WTC11 (cell line): ENCODE measurements at regions of chr12 and their contacts with region 1.

Region 1: DNA sequence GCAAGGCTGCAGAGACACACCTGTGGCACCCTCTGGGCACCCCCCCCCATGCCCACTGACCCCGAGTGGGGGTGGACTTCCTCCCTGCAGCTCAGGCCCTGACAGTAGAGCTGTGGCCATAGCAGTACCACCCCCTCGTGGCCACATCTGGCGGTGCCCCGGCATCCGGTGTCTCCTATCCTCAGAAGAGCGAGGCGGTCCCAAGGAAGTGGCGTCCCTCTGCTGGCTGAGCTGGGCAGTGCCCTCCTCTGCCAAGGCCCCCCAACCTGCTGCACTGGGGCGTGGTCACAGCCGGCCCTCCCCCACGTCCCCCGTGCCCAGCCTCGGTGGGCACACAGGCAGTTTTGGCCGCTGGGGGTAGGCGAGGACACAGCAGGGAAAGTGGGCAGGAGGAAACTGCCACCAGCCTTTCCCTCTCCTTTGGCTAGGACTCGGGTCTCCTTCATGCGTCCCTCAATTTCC is 6.0 kb upstream of the SLC6A12 start:
- DNase-seq: peak; percentile 97
- ATAC-seq: peak; percentile 99
- H3K4me3 Mint-ChIP-seq: peak overlapping the region; percentile 25; the same call in 1 of the 2 replicates
- H3K27ac Mint-ChIP-seq: no peak overlapping the region
- H3K4me1 Mint-ChIP-seq: peaks cover 9% of the 10 kb centered on the region
- H3K27me3 Mint-ChIP-seq: peaks cover 5% of the 10 kb centered on the region; the same call in 1 of the 2 replicates
- CTCF ChIP-seq: peak; percentile 86

Region 2: GRCh38 chr12:138898-139534 is 80.9 kb before region 1 on chr12:
- CTCF ChIA-PET with region 1: interaction called, 10 read pairs
- POLR2A ChIA-PET with region 1: no interaction called
- DNase-seq: peak; percentile 49
- ATAC-seq: peak; percentile 46
- H3K4me3 Mint-ChIP-seq: peak overlapping the region; percentile 50
- H3K27ac Mint-ChIP-seq: no peak overlapping the region
- H3K4me1 Mint-ChIP-seq: peaks cover 45% of the 10 kb centered on the region
- H3K27me3 Mint-ChIP-seq: peaks cover 43% of the 10 kb centered on the region
- CTCF ChIP-seq: no peak

Region 3: DNA sequence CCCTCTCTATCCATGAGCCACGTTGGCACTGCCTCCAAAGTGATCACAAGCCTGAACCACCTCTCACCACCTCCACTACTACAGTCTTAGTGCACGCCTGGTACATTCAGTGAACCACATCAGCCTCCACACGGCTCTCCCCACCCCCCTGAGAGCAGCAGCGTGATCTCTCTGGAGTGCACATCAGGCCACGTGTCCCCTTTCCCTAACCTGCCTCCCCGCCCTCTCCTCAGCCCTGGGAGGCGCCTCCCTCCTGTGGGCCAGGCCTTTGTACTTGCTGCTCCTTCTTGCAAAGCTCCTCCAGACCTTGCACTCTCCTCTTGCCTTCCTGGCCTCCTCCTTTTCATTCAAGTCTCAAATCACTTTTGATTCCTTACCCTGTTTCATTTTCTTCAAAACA is 55.7 kb before region 1 on chr12:
- CTCF ChIA-PET with region 1: interaction called, 28 read pairs
- POLR2A ChIA-PET with region 1: no interaction called
- DNase-seq: no peak
- ATAC-seq: no peak
- H3K4me3 Mint-ChIP-seq: no peak overlapping the region
- H3K27ac Mint-ChIP-seq: no peak overlapping the region
- H3K4me1 Mint-ChIP-seq: peaks cover 26% of the 10 kb centered on the region
- H3K27me3 Mint-ChIP-seq: peaks cover 5% of the 10 kb centered on the region; the same call in 1 of the 2 replicates
- CTCF ChIP-seq: no peak

Region 4: GRCh38 chr12:176321-177181 is 43.4 kb before region 1 on chr12:
- CTCF ChIA-PET with region 1: interaction called, 36 read pairs
- POLR2A ChIA-PET with region 1: no interaction called
- DNase-seq: no peak
- ATAC-seq: no peak
- H3K4me3 Mint-ChIP-seq: no peak overlapping the region
- H3K27ac Mint-ChIP-seq: peak overlapping the region; percentile 11; the same call in 1 of the 2 replicates
- H3K4me1 Mint-ChIP-seq: peaks cover 28% of the 10 kb centered on the region
- H3K27me3 Mint-ChIP-seq: no peaks in the 10 kb centered on the region; the same call in 1 of the 2 replicates
- CTCF ChIP-seq: no peak

Region 5: GRCh38 chr12:195156-195555 is 24.8 kb before region 1 on chr12:
- CTCF ChIA-PET with region 1: interaction called, 52 read pairs
- POLR2A ChIA-PET with region 1: interaction called, 4 read pairs
- DNase-seq: no peak
- ATAC-seq: no peak
- H3K4me3 Mint-ChIP-seq: no peak overlapping the region
- H3K27ac Mint-ChIP-seq: no peak overlapping the region
- H3K4me1 Mint-ChIP-seq: peaks cover 7% of the 10 kb centered on the region
- H3K27me3 Mint-ChIP-seq: peaks cover 15% of the 10 kb centered on the region
- CTCF ChIP-seq: no peak

Region 6: DNA sequence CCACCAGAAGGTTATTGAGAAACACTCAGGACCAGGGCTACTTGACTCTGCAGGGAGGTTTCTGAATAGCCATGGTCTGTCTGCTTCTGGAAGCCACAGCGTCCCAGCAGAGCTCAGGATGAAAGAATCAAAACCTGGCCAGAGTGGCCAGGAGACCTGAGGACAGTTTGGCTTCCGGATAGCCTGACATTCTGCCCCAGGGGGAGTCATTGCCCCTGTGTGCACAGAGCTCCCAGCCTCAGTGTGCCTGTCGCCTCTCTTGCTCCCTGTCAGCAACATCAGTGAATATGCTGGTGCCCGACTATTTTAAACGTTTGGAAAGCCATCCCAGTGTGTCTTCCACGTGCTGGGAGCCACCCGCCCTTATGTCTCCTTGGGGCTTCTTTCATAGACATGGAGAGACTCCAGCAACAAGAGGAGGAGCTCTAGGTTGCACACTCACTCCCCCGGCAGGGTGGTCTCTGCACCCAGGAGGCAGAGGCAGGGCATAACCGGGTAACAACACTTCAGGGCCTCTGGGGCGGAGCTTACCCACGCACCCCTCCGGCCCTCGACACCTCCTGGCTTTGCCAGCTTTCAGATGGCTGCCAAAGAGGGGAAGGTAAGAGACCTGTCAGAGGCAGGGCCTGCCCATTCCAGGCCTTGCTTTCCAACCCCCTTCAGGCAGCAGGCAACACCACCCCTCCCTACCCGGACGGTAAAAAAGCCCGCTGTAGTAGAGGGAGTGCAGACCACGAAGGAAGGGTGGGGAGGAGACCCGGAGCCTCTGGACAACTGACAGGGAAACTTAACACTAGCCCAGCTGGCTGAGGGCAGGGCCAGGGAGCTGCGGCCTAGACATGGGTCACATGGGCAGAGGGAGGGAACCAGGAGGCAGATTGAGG is 13.1 kb after region 1 on chr12:
- CTCF ChIA-PET with region 1: interaction called, 40 read pairs
- POLR2A ChIA-PET with region 1: interaction called, 4 read pairs
- DNase-seq: no peak
- ATAC-seq: no peak; the same call in 1 of the 2 replicates
- H3K4me3 Mint-ChIP-seq: no peak overlapping the region
- H3K27ac Mint-ChIP-seq: no peak overlapping the region
- H3K4me1 Mint-ChIP-seq: peaks cover 13% of the 10 kb centered on the region
- H3K27me3 Mint-ChIP-seq: peaks cover 16% of the 10 kb centered on the region
- CTCF ChIP-seq: no peak

Region 7: DNA sequence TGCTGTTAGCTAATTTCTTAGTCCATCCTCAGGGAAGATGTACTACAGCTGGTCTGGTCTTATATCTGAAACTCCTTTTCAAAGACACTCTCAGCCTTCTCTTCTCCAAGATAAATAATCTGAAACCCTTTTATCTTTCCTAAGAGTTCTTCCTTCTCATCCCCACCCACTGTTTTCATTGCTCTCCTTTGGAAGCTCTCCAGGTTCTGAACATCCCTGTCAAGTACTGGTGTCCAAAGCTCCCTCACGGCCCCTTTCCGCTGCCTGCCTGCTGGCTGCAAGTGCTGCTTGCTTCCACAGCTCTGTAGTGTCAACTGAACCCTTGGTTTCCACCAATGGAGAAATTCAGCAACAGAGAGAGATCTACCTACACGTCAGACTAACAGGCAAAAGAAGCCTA is 49.3 kb after region 1 on chr12:
- CTCF ChIA-PET with region 1: interaction called, 11 read pairs
- POLR2A ChIA-PET with region 1: no interaction called
- DNase-seq: no peak
- ATAC-seq: no peak
- H3K4me3 Mint-ChIP-seq: no peak overlapping the region
- H3K27ac Mint-ChIP-seq: no peak overlapping the region
- H3K4me1 Mint-ChIP-seq: no peaks in the 10 kb centered on the region
- H3K27me3 Mint-ChIP-seq: no peaks in the 10 kb centered on the region
- CTCF ChIP-seq: no peak

Region 8: GRCh38 chr12:308492-308891 is 88.6 kb after region 1 on chr12:
- CTCF ChIA-PET with region 1: no interaction called
- POLR2A ChIA-PET with region 1: no interaction called
- DNase-seq: no peak
- ATAC-seq: no peak
- H3K4me3 Mint-ChIP-seq: no peak overlapping the region
- H3K27ac Mint-ChIP-seq: no peak overlapping the region
- H3K4me1 Mint-ChIP-seq: no peaks in the 10 kb centered on the region
- H3K27me3 Mint-ChIP-seq: no peaks in the 10 kb centered on the region
- CTCF ChIP-seq: no peak

Region 9: DNA sequence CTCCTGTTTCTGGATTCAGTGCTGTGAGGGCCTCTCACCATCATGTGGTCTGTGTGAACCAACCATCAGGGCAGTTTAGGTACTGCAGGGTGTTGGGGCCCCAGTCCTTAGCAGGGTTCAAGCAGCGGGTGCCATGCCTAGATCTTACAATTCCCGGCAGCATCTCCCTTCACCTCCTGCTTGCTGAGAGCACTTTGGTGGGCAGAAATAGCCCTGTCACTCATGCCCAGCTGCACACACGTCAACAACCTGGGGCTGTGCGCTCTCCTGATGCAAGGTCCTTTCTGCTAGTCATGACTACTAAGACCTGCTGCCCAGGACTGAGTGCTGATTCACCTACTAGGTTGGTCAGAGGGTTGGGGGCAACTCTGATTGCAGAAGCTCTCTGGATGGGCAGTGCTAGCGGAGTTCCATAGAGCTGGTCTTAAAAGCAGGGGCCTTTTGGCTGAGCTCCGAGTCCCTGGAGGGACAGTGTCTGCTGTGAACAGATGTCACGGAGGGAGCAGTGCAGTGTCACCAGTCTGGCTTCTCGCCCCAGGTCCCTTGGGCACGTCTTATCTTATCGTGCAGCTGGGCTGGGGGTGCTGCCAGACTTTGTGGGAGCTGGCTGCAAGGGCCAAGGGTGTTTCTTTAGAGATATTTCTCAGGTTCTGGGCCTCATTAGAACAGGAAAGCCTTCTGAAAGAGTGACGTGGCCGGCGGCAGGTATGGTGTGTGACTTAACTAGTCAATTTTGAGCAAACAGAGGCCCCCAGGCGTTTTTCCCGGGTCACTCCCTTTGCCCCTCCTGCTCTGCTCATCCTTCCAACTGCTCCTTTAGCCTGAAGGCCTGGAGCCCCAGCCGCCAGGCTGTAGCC is 371.5 kb after region 1 on chr12:
- CTCF ChIA-PET with region 1: no interaction called
- POLR2A ChIA-PET with region 1: no interaction called
- DNase-seq: no peak
- ATAC-seq: peak; percentile 81
- H3K4me3 Mint-ChIP-seq: no peak overlapping the region
- H3K27ac Mint-ChIP-seq: no peak overlapping the region
- H3K4me1 Mint-ChIP-seq: no peaks in the 10 kb centered on the region
- H3K27me3 Mint-ChIP-seq: no peaks in the 10 kb centered on the region
- CTCF ChIP-seq: no peak